Activated CD4-positive, alpha-beta T cell treated with anti-CD3 and anti-CD28 coated beads, Interleukin-2, amount 10 ng/mL, durations not matched to agents 24 days and 14 days (primary cell): ENCODE measurements at regions of chr3 and their contacts with region 1.

Region 1: DNA sequence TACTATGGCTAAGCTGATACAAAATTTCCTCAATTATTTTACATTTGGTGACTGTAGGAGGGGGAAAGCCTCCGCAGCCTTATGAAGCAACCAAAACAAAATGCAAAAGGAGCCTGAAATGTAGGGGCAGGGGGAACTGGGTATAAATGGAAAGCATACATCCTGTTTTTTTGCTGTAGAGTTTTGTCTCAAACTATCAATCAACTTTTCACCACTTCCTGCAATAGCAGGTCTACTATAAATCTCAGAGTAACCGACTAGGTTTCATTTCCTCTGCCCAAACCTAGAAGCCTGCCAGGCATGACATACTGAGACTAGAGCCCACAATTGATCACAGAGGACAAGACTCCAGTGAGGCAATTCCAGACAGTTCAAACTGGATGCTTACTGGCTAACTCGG is 91.3 kb downstream of the SHQ1 start:
- DNase-seq: peak; percentile 87
- H3K4me3 Mint-ChIP-seq: peak overlapping the region; percentile 60
- H3K27ac Mint-ChIP-seq: peak overlapping the region; percentile 81
- H3K4me1 Mint-ChIP-seq: peaks cover 39% of the 10 kb centered on the region
- H3K27me3 Mint-ChIP-seq: no peaks in the 10 kb centered on the region

Region 2: DNA sequence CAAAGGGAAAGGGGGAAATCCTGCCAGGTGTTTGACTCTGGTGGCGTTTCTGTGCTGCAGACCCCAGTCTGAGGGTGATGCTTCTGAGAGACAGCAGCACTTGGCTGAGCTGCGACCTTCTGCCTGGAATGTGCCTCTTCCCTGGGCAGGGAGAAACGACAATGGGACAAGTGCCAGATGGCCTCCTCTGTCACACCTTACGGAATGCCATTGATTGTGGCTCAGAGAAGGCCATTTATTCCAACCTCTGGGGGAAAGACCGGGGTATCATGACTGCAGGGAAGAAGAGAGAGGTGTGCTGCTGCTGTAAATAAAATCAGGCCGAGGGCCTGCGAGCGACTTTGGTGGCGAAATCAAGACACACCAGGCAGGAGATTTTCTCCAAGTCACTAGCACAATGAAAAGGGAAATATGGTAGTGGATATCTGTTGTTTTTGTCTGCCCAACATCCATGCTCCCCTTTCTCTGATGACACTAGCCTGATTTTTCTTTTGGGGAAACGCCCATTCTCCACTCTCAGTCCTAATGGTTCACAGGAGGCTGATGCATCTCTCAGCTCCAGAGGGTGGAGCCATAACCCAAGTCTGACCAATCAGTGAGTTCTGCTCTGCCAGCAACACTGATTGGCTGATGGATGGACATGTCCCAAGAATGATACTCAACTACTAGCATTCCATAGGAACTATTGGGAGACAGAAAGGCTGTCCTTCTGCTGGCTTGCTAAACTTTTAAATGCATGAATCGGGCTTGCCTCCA is 1509.5 kb before region 1 on chr3:
- intact Hi-C with region 1: no loop called
- DNase-seq: no peak
- H3K4me3 Mint-ChIP-seq: no peak overlapping the region
- H3K27ac Mint-ChIP-seq: peak overlapping the region; percentile 43
- H3K4me1 Mint-ChIP-seq: peaks cover 3% of the 10 kb centered on the region
- H3K27me3 Mint-ChIP-seq: peaks cover 2% of the 10 kb centered on the region

Region 3: GRCh38 chr3:72722930-72723726 is 33.8 kb before region 1 on chr3:
- intact Hi-C with region 1: loop called (anchors 1 kb)
- DNase-seq: no peak
- H3K4me3 Mint-ChIP-seq: no peak overlapping the region
- H3K27ac Mint-ChIP-seq: peak overlapping the region; percentile 70
- H3K4me1 Mint-ChIP-seq: peaks cover 9% of the 10 kb centered on the region
- H3K27me3 Mint-ChIP-seq: no peaks in the 10 kb centered on the region

Region 4: GRCh38 chr3:72738752-72739530 is 18.0 kb before region 1 on chr3:
- intact Hi-C with region 1: loop called (anchors 2 kb)
- DNase-seq: peak; percentile 91
- H3K4me3 Mint-ChIP-seq: peak overlapping the region; percentile 89
- H3K27ac Mint-ChIP-seq: peak overlapping the region; percentile 92
- H3K4me1 Mint-ChIP-seq: peaks cover 18% of the 10 kb centered on the region
- H3K27me3 Mint-ChIP-seq: no peaks in the 10 kb centered on the region

Region 5: GRCh38 chr3:72800869-72801268 is 44.0 kb after region 1 on chr3:
- intact Hi-C with region 1: loop called (anchors 5 kb)
- DNase-seq: no peak
- H3K4me3 Mint-ChIP-seq: no peak overlapping the region
- H3K27ac Mint-ChIP-seq: peak overlapping the region; percentile 32
- H3K4me1 Mint-ChIP-seq: peaks cover 7% of the 10 kb centered on the region
- H3K27me3 Mint-ChIP-seq: no peaks in the 10 kb centered on the region

Region 6: GRCh38 chr3:73018790-73019441 is 262.0 kb after region 1 on chr3:
- intact Hi-C with region 1: no loop called
- DNase-seq: no peak
- H3K4me3 Mint-ChIP-seq: no peak overlapping the region
- H3K27ac Mint-ChIP-seq: no peak overlapping the region
- H3K4me1 Mint-ChIP-seq: peaks cover 26% of the 10 kb centered on the region
- H3K27me3 Mint-ChIP-seq: no peaks in the 10 kb centered on the region